ENCODE measurements at regions of chr12 and their contacts with region 1.

Region 1: GRCh38 chr12:57124259-57124877 is 3.9 kb upstream of the LRP1 start:
- DNase-seq: peak; percentile 79
- H3K4me3 ChIP-seq: no peak overlapping the region
- H3K27ac ChIP-seq: no peak overlapping the region
- H3K4me1 ChIP-seq: peaks cover 12% of the 10 kb centered on the region
- H3K27me3 ChIP-seq: no peaks in the 10 kb centered on the region

Region 2: DNA sequence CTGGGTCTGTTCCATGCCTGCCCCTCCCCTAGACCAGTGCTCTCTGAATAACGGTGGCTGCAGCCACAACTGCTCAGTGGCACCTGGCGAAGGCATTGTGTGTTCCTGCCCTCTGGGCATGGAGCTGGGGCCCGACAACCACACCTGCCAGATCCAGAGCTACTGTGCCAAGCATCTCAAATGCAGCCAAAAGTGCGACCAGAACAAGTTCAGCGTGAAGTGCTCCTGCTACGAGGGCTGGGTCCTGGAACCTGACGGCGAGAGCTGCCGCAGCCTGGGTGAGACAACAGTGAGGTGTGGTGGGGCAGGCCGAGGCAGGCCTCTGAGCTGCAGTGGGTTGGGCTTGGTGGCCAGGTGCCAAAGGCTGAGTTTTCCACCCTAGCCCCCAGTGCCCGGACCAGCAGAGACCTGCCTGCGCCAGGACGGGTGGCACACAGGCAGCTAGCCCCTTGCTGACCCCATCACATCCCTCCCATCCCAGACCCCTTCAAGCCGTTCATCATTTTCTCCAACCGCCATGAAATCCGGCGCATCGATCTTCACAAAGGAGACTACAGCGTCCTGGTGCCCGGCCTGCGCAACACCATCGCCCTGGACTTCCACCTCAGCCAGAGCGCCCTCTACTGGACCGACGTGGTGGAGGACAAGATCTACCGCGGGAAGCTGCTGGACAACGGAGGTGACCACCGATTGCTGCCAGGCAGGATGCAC is 51.2 kb after region 1 on chr12:
- in situ Hi-C with region 1: loop called (anchors 5 kb)
- DNase-seq: peak; percentile 87
- H3K4me3 ChIP-seq: no peak overlapping the region
- H3K27ac ChIP-seq: peak overlapping the region; percentile 48; the same call in 1 of the 2 replicates
- H3K4me1 ChIP-seq: peaks cover 14% of the 10 kb centered on the region
- H3K27me3 ChIP-seq: no peaks in the 10 kb centered on the region

Measured in GM23248 (cell line).